ENCODE measurements at regions of chr3 and their contacts with region 1.

Region 1: DNA sequence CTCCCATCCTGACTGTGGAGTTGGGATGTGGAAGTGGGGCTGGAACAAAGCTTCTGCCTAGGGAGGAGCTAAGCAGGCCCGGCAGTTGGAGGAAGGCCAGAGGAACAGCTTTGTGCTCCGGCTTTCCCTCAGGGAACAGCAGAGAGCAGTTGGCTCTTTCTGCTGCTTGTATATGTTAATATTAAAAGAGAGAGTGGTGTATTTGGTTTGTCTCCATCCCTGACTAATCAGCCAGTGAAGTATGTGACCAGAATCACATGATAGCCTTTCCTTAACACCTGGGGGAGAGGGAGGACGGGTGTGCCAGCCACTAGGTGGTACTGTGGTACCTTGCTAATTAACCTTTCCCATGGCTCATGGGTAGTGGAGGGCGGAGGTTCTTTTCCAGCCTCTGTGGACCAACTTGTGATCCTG is 10.0 kb downstream of the EIF2B5 start:
- DNase-seq: peak in 1 of 2 experiments; percentile 62
- H3K4me3 ChIP-seq: no peak overlapping the region
- H3K27ac ChIP-seq: no peak overlapping the region
- H3K4me1 ChIP-seq: no peaks in the 10 kb centered on the region
- H3K27me3 ChIP-seq: no peaks in the 10 kb centered on the region
- CTCF ChIP-seq: peak; percentile 72 to 82 (median 73)
- EP300 ChIP-seq: no peak
- POLR2A ChIP-seq: no peak
- RAD21 ChIP-seq: peak; percentile 79 to 83

Region 2: GRCh38 chr3:184110316-184110725 is 34.8 kb before region 1 on chr3:
- CTCF ChIA-PET with region 1: no interaction called
- POLR2A ChIA-PET with region 1: no interaction called
- DNase-seq: no peak
- H3K4me3 ChIP-seq: no peak overlapping the region
- H3K27ac ChIP-seq: no peak overlapping the region
- H3K4me1 ChIP-seq: no peaks in the 10 kb centered on the region
- H3K27me3 ChIP-seq: no peaks in the 10 kb centered on the region
- CTCF ChIP-seq: no peak
- EP300 ChIP-seq: no peak
- POLR2A ChIP-seq: no peak
- RAD21 ChIP-seq: no peak

Region 3: GRCh38 chr3:184129012-184129411 is 16.1 kb before region 1 on chr3:
- CTCF ChIA-PET with region 1: interaction called, 19 read pairs
- POLR2A ChIA-PET with region 1: interaction called, 26 read pairs
- DNase-seq: peak in 1 of 2 experiments; percentile 59
- H3K4me3 ChIP-seq: no peak overlapping the region
- H3K27ac ChIP-seq: no peak overlapping the region
- H3K4me1 ChIP-seq: peaks cover 0 to 1% (median 0%) of the 10 kb centered on the region in 4 experiments; a peak in 1 of 7 replicates
- H3K27me3 ChIP-seq: no peaks in the 10 kb centered on the region
- CTCF ChIP-seq: peak; percentile 36 to 69 (median 55); a peak in 3 of 4 replicates
- EP300 ChIP-seq: no peak
- POLR2A ChIP-seq: no peak
- RAD21 ChIP-seq: peak; percentile 39 to 49

Region 4: DNA sequence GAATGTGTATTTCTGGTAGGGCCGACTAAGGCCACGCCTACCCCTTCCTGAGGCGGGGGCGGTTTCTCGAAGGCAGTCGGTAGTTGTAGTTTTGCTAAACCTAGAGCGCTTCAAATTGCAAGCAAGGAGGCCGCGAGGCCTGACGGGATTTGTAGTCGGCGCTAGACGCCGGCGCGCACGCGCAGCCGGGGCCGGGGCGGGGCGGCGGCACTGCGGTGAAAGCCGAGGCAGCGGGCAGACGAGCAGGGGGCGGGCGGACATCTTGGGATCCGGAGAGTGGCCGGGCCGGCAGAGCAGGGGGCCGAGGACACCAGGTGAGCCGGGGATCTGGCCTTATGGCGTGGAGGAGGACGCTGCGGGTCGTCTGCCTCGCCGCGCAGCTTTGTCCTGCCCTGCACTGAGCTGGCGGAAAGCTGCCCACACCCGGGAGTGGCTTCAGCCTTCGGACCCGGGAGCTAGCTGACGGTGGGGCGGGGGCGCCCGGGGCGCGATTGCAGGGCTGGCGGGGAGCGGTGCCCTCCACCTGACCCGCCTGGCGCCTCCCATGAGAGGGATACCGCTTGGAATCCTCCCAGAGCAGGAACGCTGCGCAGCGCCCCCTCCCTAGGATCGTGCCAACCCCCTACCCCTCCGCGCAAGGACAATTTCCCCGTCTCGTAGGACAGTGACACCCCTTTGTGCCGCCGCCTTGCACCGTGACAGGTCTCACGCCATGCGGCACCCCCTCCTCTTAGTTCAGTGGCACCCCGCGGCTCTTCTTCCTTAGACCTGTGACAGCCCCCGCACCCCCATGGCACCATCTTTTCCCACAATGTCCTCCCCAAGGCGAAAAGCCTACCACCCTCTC is 29.8 kb after region 1 on chr3 and contains the start of gene AP2M1:
- CTCF ChIA-PET with region 1: interaction called, 14 read pairs
- POLR2A ChIA-PET with region 1: interaction called, 5 read pairs
- DNase-seq: peak; percentile 96 to 98
- H3K4me3 ChIP-seq: peak within 1 kb of the TSS; percentile 68 to 92 (median 86)
- H3K27ac ChIP-seq: peak within 1 kb of the TSS; percentile 87
- H3K4me1 ChIP-seq: peaks cover 0 to 23% (median 15%) of the 10 kb centered on the region in 4 experiments; a peak in 6 of 7 replicates
- H3K27me3 ChIP-seq: no peaks in the 10 kb centered on the region
- CTCF ChIP-seq: 0 out of 4 replicates have a peak, but pooled peaks of 1 of the 3 experiments have one; percentile 5
- EP300 ChIP-seq: no peak
- POLR2A ChIP-seq: peak in 1 of 2 experiments; percentile 71; a peak in 2 of 3 replicates
- RAD21 ChIP-seq: no peak
- total RNA-seq, gene AP2M1: 391 and 403 TPM in 2 replicates

Region 5: GRCh38 chr3:184180165-184180564 is 35.0 kb after region 1 on chr3:
- CTCF ChIA-PET with region 1: interaction called, 14 read pairs
- POLR2A ChIA-PET with region 1: interaction called, 5 read pairs
- DNase-seq: no peak
- H3K4me3 ChIP-seq: no peak overlapping the region
- H3K27ac ChIP-seq: no peak overlapping the region
- H3K4me1 ChIP-seq: peaks cover 0 to 26% (median 18%) of the 10 kb centered on the region in 4 experiments; a peak in 6 of 7 replicates
- H3K27me3 ChIP-seq: no peaks in the 10 kb centered on the region
- CTCF ChIP-seq: no peak
- EP300 ChIP-seq: no peak
- POLR2A ChIP-seq: no peak
- RAD21 ChIP-seq: no peak

Region 6: GRCh38 chr3:184241447-184242296 is 96.6 kb after region 1 on chr3:
- CTCF ChIA-PET with region 1: interaction called, 28 read pairs
- POLR2A ChIA-PET with region 1: interaction called, 5 read pairs
- DNase-seq: peak in 1 of 2 experiments; percentile 57
- H3K4me3 ChIP-seq: peak overlapping the region in 3 of 4 experiments; percentile 26 to 54 (median 42); a peak in 6 of 8 replicates
- H3K27ac ChIP-seq: no peak overlapping the region
- H3K4me1 ChIP-seq: peaks cover 0 to 5% (median 1%) of the 10 kb centered on the region in 4 experiments; a peak in 3 of 7 replicates
- H3K27me3 ChIP-seq: no peaks in the 10 kb centered on the region; a peak in 2 of 7 replicates
- CTCF ChIP-seq: peak in 2 of 3 experiments; percentile 41 to 56; a peak in 3 of 4 replicates
- EP300 ChIP-seq: no peak
- POLR2A ChIP-seq: no peak
- RAD21 ChIP-seq: peak; percentile 45 to 65

Region 7: DNA sequence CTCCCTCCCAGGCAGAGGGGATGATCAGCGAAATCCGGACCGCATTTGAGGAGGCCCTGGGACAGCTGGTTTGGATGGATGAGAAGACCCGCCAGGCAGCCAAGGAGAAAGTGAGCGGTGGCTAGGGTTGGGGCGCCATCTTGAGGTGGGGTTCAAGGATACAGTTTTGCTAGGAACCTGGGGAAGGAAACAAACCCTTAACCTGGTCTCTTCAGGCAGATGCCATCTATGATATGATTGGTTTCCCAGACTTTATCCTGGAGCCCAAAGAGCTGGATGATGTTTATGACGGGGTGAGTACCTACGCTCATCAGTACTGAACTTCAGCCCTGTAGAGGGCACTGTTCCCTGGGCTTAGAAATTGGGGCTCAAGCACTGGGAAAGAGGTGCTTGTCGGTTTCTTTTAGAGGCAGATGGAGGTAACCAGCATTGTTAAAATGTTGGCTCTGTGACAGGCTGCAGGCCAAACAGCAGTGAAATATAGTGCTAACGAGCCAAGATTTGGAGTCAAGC is 144.4 kb after region 1 on chr3:
- CTCF ChIA-PET with region 1: interaction called, 18 read pairs
- POLR2A ChIA-PET with region 1: no interaction called
- DNase-seq: peak; percentile 57 to 91
- H3K4me3 ChIP-seq: no peak overlapping the region
- H3K27ac ChIP-seq: no peak overlapping the region
- H3K4me1 ChIP-seq: peaks cover 0 to 2% (median 0%) of the 10 kb centered on the region in 4 experiments; a peak in 2 of 7 replicates
- H3K27me3 ChIP-seq: no peaks in the 10 kb centered on the region
- CTCF ChIP-seq: peak; percentile 63 to 82 (median 78)
- EP300 ChIP-seq: no peak
- POLR2A ChIP-seq: no peak
- RAD21 ChIP-seq: peak; percentile 94 to 96

Measured in H1 (cell line).